Dendritic cell treated with granulocyte-macrophage colony-stimulating factor and Interleukin-4, amounts not matched to agents 40 ng/mL and 50 ng/mL, for 4 days (primary cell): ENCODE measurements at regions of chr20 and their contacts with region 1.

Region 1: DNA sequence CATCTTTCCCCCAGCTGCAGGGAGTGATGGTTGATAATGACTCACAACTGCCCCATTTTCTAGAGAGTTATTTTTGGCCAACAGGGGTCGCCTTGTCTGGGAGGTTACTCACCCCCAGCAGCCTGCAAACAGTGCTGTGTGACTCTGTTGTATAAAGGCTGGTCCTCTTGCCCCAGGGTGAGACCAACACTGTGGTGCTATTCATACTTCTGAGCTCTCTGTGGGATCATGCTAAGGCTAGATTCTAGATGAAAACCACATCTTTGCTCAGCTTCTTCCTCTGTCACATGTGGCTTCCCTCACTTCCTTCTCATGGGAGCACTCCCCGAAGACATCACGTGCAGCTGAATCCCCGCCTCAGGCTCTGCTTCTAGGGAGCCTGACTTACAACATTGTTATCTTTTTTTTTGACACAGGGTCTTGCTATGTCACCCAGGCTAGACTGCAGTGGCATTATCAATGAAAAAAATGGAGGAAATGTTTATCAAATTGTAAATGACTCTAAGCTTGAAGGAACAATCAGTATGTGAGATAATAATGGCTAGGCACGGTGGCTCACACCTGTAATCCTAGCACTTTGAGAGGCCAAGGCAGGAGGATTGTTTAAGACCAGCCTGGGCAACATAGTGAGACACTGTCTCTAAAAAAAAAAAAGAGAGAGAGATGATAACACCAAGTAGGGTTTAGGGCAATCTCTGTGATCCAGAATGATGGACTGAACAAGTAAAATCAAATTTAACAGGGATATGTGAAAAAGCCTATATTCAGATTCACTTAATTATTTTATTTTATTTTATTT is 55.7 kb upstream of the SLC23A2 start:
- H3K4me3 Mint-ChIP-seq: no peak overlapping the region
- H3K27ac Mint-ChIP-seq: peak overlapping the region; percentile 87
- H3K4me1 Mint-ChIP-seq: peaks cover 42% of the 10 kb centered on the region
- H3K27me3 Mint-ChIP-seq: peaks cover 1% of the 10 kb centered on the region

Region 2: DNA sequence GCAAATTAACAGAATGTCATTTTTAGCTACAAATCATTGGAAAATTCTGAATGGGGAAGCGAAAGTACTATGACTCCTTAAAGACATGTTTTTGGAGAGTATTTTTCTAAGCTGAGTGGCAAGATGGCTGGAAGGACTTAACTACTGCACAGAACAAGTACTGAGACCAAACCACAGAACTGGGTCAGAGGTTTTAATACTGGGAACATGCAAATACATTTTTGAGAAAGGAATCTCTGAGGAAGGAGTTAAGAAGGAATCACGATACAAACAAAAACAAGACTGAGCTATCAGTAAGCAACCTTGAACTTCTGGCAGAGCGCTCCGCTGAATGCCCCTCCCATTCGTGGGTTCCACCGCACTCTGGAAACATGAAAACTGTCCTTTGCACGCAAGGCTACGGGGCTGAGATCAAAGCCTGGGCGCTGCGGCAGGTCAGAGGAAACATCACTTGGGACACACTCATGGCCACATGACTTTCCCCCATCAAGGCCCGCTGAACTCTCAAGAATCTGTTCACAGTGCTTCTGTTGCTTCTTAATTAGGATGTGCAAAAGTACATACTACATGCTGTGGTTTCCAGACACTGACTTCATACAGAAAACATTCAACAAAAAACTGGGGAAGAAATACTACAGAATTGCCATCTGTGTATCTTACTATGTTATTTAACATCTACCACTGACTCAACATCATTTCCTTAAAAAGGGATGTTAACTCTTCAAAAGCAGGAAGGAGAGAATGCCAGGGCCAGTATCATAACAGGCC is 83.5 kb before region 1 on chr20:
- intact Hi-C with region 1: no loop called
- H3K4me3 Mint-ChIP-seq: peak overlapping the region; percentile 67
- H3K27ac Mint-ChIP-seq: peak overlapping the region; percentile 87
- H3K4me1 Mint-ChIP-seq: peaks cover 29% of the 10 kb centered on the region
- H3K27me3 Mint-ChIP-seq: no peaks in the 10 kb centered on the region

Region 3: DNA sequence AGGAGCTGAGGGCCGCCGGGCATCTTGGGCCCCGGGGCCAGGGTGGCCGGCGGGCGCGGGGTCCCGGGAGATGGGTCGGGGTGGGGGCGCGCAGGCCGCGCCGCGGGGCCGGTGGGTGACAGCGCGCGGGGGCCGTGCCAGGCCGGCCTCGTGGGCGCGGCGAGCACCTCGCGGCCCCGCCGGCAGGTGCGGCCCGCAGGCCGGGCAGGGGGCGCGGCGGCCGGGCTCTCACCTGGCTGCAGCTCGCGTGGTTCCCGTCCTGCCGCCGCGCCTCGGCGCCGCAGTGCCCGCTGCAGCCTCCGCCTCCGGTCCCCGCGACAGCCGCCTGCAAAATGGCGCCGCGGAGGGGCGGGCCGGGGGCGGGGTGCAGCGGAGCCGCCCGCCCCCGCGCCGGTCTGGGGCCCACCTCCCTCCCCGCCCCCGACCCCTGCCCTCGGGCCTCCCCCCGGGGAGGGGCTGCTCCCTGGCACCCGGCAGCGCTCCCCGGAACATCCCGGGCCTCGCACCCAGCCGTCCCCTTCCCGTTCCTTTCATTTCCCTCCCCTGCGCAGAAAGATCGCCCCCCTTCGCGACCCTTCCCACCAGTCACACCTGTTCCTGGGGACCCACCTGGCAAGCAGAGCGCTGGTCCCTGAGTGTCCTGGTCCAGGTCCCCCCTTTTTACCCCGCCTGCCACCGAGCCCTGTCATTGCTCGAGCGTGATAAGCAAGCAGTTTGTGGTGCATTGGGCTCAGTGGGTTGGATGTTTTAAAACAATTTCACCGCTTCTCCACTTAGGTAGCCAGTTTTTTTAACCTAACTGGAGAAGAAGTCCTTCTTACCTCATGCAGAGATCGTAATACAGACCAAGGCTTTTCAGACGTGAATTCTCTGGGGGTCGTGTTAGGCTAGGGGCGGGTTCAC is 55.6 kb before region 1 on chr20 and contains the start of gene SLC23A2:
- intact Hi-C with region 1: loop called (anchors 5 kb)
- H3K4me3 Mint-ChIP-seq: peak within 1 kb of the TSS; percentile 98
- H3K27ac Mint-ChIP-seq: peak within 1 kb of the TSS; percentile 94
- H3K4me1 Mint-ChIP-seq: peaks cover 45% of the 10 kb centered on the region
- H3K27me3 Mint-ChIP-seq: peaks cover 2% of the 10 kb centered on the region